ENCODE measurements at regions of chr4 and their contacts with region 1.

Region 1: DNA sequence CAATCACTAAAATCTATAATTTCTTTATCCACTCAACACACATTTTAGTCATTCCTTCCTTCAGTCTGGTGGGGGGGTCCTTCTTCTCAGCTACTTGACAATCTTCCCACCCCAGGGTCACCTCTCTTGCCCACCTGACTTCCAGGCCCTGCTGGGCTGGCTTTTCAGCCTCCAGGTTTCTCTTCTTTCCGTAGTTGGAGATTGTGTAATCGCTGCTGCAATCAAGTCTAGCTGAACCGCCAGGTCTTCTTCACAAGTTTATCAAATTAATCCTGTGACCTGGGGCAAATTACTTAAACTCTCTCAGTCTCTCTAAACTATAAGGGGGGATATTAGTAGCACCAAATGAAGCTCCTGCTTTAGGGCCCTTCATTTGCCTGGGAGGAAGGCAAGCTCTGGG is 102.9 kb upstream of the TNIP3 start:
- DNase-seq: no peak
- ATAC-seq: no peak
- H3K4me3 ChIP-seq: no peak overlapping the region
- H3K4me3 Mint-ChIP-seq: no peak overlapping the region
- H3K27ac ChIP-seq: no peak overlapping the region
- H3K27ac Mint-ChIP-seq: no peak overlapping the region
- H3K4me1 ChIP-seq: no peaks in the 10 kb centered on the region
- H3K4me1 Mint-ChIP-seq: peaks cover 15% of the 10 kb centered on the region
- H3K27me3 ChIP-seq: no peaks in the 10 kb centered on the region
- H3K27me3 Mint-ChIP-seq: no peaks in the 10 kb centered on the region
- CTCF ChIP-seq: no peak

Region 2: DNA sequence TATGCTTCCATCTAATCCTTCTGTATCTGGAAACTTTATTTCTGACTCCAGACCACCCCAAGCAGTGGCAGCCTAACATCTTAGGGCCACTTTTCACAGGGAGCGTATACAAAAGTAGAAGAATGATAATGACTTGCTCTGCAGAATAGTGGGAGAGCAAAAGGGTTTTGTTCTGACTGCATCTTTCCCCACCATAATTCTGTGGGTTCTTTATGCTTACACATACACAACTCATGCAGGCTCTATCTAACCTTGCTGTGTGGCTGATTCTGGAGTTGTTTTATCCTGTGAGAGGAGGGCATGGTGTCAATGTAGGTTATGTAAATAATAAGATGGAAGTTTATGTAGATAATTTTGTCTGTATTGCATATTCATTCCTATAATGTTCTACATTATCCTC is 152.2 kb before region 1 on chr4:
- CTCF ChIA-PET with region 1: no interaction called
- POLR2A ChIA-PET with region 1: no interaction called
- intact Hi-C with region 1: loop called in 1 of 2 experiments (anchors 5 kb)
- DNase-seq: no peak
- ATAC-seq: no peak
- H3K4me3 ChIP-seq: no peak overlapping the region
- H3K4me3 Mint-ChIP-seq: no peak overlapping the region
- H3K27ac ChIP-seq: no peak overlapping the region
- H3K27ac Mint-ChIP-seq: no peak overlapping the region
- H3K4me1 ChIP-seq: peaks cover 5% of the 10 kb centered on the region
- H3K4me1 Mint-ChIP-seq: peaks cover 14% of the 10 kb centered on the region
- H3K27me3 ChIP-seq: no peaks in the 10 kb centered on the region
- H3K27me3 Mint-ChIP-seq: no peaks in the 10 kb centered on the region
- CTCF ChIP-seq: no peak

Measured in CD4-positive, alpha-beta T cell (primary cell).